Posterior cingulate gyrus (tissue), 11 donors: ENCODE measurements at regions of chr3 and their contacts with region 1.

Region 1: GRCh38 chr3:172476347-172476746 is 28.1 kb upstream of the GHSR start:
- DNase-seq: no peak

Region 2: GRCh38 chr3:172332256-172333041 is 143.9 kb before region 1 on chr3:
- intact Hi-C with region 1: loop called (anchors 5 kb)
- DNase-seq: peak in 7 of 10 donors; percentile 15 to 92 (median 66)